Activated CD4-positive, alpha-beta T cell treated with anti-CD3 and anti-CD28 coated beads, Interleukin-2, amount 10 ng/mL, durations not matched to agents 24 days and 14 days (primary cell): ENCODE measurements at regions of chr2 and their contacts with region 1.

Region 1: DNA sequence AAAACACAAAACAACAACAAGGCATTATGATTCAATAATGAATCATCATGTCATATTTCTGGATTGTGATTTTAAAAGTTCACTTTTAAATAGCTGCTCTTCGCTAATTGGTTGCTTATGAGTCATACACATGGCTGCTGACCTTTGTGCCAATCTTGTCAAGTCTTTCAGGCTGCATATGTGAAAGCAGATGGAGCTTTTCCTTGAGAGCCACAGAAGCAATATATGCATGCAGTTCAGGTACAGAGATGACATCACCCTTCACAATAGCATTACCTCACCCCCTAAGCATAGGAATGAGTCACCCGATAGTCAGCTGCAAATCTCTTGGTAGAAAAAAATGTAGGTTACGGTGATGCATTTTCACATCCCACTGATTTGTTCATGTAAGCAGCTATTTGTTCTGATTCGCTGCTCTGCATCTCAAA is 27.2 kb downstream of the EIF2AK3 start:
- DNase-seq: peak; percentile 86
- H3K4me3 Mint-ChIP-seq: no peak overlapping the region
- H3K27ac Mint-ChIP-seq: peak overlapping the region; percentile 64
- H3K4me1 Mint-ChIP-seq: peaks cover 24% of the 10 kb centered on the region
- H3K27me3 Mint-ChIP-seq: no peaks in the 10 kb centered on the region

Region 2: GRCh38 chr2:88614497-88615157 is 14.6 kb after region 1 on chr2:
- intact Hi-C with region 1: loop called (anchors 2 kb)
- DNase-seq: no peak
- H3K4me3 Mint-ChIP-seq: no peak overlapping the region
- H3K27ac Mint-ChIP-seq: no peak overlapping the region
- H3K4me1 Mint-ChIP-seq: peaks cover 12% of the 10 kb centered on the region
- H3K27me3 Mint-ChIP-seq: no peaks in the 10 kb centered on the region

Region 3: GRCh38 chr2:88638743-88639142 is 38.7 kb after region 1 on chr2:
- intact Hi-C with region 1: loop called (anchors 2 kb)
- DNase-seq: peak; percentile 76
- H3K4me3 Mint-ChIP-seq: peak overlapping the region; percentile 48
- H3K27ac Mint-ChIP-seq: peak overlapping the region; percentile 86
- H3K4me1 Mint-ChIP-seq: peaks cover 44% of the 10 kb centered on the region
- H3K27me3 Mint-ChIP-seq: no peaks in the 10 kb centered on the region